Dorsolateral prefrontal cortex (tissue), 120 donors: ENCODE measurements at regions of chr20 and their contacts with region 1.

Region 1: DNA sequence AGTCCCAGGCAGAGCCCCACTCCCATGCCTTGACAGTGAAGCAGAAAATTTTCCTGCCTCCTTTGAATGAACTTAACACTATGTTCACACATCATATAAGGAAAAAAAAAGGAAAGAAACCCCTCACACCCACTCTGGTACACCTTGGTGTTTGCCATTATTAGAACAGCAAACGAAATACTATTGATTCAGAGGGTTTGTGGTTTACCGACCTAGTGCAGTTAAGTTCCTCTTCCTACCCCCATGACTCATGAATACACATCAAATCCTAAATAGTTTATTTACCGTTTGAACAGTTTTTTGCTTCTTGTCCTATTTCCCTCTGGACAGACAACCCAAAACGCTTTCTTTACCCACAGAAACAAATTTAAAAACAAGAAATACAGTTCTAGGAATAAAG is 237.7 kb downstream of the FOXA2 start:
- DNase-seq: no peak
- H3K4me3 ChIP-seq: no peak overlapping the region
- H3K27ac ChIP-seq: no peak overlapping the region
- H3K27me3 ChIP-seq: peaks cover 0 to 60% (median 26%) of the 10 kb centered on the region in 45 donors
- CTCF ChIP-seq: no peak

Region 2: GRCh38 chr20:21894579-21894978 is 452.1 kb before region 1 on chr20:
- intact Hi-C with region 1: no loop called
- DNase-seq: no peak
- H3K4me3 ChIP-seq: no peak overlapping the region
- H3K27ac ChIP-seq: no peak overlapping the region
- H3K27me3 ChIP-seq: no peaks in the 10 kb centered on the region
- CTCF ChIP-seq: no peak

Region 3: DNA sequence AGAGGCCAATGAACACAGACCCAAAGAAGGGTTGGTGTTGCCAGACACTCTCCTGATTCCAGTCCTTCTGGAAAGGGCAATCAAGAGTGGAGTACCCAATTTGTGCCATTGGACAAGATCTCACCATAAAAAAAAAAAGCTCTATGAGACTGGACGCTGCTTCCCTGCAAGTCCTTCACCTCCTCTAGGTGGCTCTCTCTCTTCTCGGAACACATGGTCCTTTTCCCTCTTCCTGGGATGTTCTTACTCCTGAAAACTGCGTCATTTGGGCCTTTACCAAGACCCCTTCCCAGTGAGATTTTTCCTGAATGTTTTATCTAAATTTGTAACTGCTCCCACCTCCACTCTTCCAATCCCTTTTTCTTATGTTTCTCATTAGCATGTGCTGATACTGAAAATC is 43.2 kb before region 1 on chr20:
- intact Hi-C with region 1: no loop called
- DNase-seq: no peak
- H3K4me3 ChIP-seq: no peak overlapping the region
- H3K27ac ChIP-seq: no peak overlapping the region
- H3K27me3 ChIP-seq: peaks cover 0 to 4% (median 0%) of the 10 kb centered on the region in 45 donors
- CTCF ChIP-seq: no peak

Region 4: DNA sequence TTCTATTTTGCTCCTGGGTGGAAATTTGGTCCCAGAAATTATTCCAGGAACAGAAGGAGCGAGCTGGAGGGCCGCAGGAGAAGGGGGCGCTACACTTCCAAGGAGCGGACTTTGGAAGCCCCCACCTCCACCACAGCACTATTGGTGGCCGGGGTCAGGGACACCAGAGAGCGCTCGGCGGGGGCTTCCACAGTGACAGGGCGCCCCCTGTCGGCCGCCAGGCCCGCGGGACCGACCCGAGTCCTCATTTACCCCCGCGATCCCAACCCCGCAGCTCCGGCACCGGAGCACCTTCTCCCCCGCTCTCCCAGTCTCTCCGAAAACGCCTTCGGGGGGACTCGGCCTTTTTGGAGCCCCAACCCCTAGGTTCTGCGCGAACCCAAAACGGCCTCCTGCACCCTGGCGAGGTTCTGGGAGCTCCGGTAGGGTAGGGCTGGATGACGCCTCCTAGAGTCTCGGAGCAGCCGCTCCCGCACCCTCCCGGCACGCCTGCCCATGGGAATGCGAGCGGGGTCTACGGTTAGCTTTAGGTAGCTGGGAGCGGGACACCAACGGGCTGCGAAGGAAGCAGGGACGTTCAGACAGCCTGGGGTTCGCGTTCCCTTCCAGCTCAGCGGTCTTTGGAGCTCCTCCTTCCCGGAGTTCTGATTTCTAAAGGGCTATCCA is 240.1 kb after region 1 on chr20:
- intact Hi-C with region 1: loop called in 1 of 2 experiments (anchors 10 kb)
- DNase-seq: no peak
- H3K4me3 ChIP-seq: peak overlapping the region in 6 of 59 donors; percentile 1 to 19 (median 14)
- H3K27ac ChIP-seq: no peak overlapping the region
- H3K27me3 ChIP-seq: peaks cover 16 to 99% (median 94%) of the 10 kb centered on the region in 45 donors
- CTCF ChIP-seq: peak in 52 of 56 donors; percentile 14 to 68 (median 42)